ENCODE measurements at regions of chr3 and their contacts with region 1.

Region 1: DNA sequence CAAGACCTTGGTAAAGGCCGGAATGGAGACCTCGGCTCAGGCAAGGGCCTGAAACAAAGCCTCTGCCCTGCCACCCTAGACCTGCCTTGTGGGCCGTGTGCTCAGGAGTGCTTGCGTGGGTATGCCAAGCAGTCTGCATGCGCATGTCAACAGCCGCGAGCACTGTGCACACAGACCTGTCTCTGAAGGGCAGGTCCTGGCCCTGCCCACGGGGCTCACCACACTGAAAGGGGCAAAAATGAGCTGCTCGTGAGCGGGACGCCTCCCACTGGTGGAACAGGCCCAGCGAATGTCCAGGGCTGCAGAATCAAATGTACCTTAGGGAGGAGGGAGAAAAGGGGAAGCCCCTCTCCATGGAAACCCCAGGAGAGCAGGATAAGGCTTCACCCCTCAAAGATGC is 44.3 kb upstream of the FGD5 start:
- DNase-seq: peak; percentile 48
- H3K4me3 ChIP-seq: no peak overlapping the region
- H3K27ac ChIP-seq: no peak overlapping the region
- H3K4me1 ChIP-seq: no peaks in the 10 kb centered on the region
- H3K27me3 ChIP-seq: no peaks in the 10 kb centered on the region
- CTCF ChIP-seq: no peak
- POLR2A ChIP-seq: no peak

Region 2: GRCh38 chr3:14678015-14678503 is 96.4 kb before region 1 on chr3:
- intact Hi-C with region 1: loop called (anchors 10 kb)
- DNase-seq: no peak
- H3K4me3 ChIP-seq: no peak overlapping the region
- H3K27ac ChIP-seq: no peak overlapping the region
- H3K4me1 ChIP-seq: no peaks in the 10 kb centered on the region
- H3K27me3 ChIP-seq: no peaks in the 10 kb centered on the region
- CTCF ChIP-seq: no peak
- POLR2A ChIP-seq: no peak

Measured in spleen (tissue), 13 donors.